CD8-positive, alpha-beta memory T cell (primary cell): ENCODE measurements at regions of chr17 and their contacts with region 1.

Region 1: DNA sequence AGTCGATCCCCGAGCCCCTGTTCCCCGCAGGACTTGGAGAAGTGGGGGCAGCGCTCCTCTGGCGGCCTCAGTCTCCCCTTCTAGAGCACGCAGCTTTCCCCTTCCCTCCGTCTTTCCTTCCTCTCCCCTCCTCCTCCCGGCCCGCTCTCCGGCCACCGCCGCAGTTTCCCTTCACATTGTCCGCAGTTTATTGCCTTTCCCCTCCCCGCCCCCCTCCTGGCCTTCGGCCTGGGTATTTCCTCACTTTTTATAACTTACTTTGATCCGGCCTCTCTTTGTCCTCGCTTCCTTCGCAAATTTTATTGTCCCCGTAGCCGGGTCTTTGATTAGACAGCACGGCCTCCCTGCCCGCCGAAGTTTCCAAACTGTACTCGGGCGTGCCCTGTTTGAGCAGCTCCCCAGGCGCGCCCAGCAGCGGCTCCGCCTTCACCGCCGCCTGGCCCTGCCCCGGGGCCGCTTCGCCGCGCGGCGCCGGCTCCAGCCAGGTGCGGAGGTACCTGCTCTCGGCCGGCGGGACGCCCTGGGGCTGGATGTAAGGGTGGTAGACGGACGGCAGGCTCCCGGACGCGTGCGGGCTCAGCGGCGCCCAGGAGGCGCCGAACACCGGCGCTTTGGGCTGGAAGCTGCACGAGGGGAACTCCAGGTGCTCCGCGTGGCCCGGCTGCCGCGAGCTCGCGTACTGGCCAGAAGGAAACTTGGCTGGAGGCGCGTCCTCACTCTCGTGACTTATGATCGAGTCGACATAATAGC is 488 bp downstream of the HOXB9 start:
- DNase-seq: peak in 2 of 5 donors; percentile 36 to 37
- H3K4me3 ChIP-seq: peak overlapping the region; percentile 41
- H3K4me3 Mint-ChIP-seq: peak overlapping the region; percentile 76 to 91 (median 84)
- H3K27ac ChIP-seq: peak overlapping the region; percentile 79
- H3K27ac Mint-ChIP-seq: peak overlapping the region in 3 of 8 donors; percentile 8 to 77 (median 12)
- H3K4me1 ChIP-seq: peaks cover 21% of the 10 kb centered on the region
- H3K4me1 Mint-ChIP-seq: peaks cover 6 to 21% (median 12%) of the 10 kb centered on the region in 3 donors
- H3K27me3 ChIP-seq: peaks cover 81% of the 10 kb centered on the region
- H3K27me3 Mint-ChIP-seq: peaks cover 59 to 91% of the 10 kb centered on the region in 2 donors

Region 2: DNA sequence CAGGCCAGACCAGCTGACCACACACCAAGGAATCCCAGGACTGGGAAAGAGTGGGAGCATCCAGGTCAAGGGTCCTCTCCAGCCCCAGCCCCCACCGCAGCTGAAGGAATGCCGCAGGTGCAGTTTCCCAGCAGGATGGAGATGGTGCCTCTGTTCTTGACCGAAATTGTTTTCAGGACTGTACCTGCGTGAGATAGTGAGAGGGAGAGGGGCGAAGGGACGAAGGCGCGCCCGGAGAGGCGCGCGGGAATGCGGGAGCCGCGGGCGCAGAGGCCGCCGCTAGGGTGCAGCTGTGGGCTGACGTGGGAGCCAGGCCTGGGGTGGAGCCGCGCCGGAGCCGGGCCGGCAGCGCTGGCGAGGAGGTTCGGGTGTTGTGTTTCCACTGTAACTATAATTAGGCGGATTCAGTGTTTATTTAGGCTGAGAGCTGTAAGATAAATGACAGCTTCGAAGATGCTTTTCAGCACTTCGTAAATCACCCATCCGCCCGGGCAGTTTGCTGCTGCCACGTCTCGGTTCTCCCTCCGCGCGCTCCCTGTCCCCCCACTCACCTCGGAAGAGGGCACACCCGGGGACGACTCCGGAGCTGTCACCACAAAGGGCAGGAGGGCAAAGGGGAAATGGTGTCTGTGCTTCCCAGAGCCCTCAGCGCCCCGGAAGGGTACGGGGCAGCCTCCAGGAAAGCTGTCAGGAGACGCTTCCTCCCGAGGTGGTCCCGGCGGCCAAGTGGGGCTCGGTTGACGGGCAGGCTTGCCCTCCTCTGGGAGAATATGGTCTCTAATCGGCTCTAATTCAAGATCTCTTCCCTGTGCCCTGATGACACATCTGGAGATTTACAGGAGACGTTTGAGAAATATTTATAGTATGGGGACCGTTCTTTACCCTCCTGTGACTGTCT is 133.0 kb before region 1 on chr17:
- CTCF ChIA-PET with region 1: no interaction called
- POLR2A ChIA-PET with region 1: no interaction called
- DNase-seq: peak; percentile 43 to 78 (median 55)
- H3K4me3 ChIP-seq: peak overlapping the region; percentile 78
- H3K4me3 Mint-ChIP-seq: peak overlapping the region in 6 of 7 donors; percentile 41 to 81 (median 65)
- H3K27ac ChIP-seq: peak overlapping the region; percentile 57
- H3K27ac Mint-ChIP-seq: peak overlapping the region in 1 of 8 donors; percentile 78
- H3K4me1 ChIP-seq: peaks cover 11% of the 10 kb centered on the region
- H3K4me1 Mint-ChIP-seq: peaks cover 2 to 12% (median 4%) of the 10 kb centered on the region in 3 donors
- H3K27me3 ChIP-seq: peaks cover 8% of the 10 kb centered on the region
- H3K27me3 Mint-ChIP-seq: peaks cover 4 to 12% of the 10 kb centered on the region in 2 donors

Region 3: DNA sequence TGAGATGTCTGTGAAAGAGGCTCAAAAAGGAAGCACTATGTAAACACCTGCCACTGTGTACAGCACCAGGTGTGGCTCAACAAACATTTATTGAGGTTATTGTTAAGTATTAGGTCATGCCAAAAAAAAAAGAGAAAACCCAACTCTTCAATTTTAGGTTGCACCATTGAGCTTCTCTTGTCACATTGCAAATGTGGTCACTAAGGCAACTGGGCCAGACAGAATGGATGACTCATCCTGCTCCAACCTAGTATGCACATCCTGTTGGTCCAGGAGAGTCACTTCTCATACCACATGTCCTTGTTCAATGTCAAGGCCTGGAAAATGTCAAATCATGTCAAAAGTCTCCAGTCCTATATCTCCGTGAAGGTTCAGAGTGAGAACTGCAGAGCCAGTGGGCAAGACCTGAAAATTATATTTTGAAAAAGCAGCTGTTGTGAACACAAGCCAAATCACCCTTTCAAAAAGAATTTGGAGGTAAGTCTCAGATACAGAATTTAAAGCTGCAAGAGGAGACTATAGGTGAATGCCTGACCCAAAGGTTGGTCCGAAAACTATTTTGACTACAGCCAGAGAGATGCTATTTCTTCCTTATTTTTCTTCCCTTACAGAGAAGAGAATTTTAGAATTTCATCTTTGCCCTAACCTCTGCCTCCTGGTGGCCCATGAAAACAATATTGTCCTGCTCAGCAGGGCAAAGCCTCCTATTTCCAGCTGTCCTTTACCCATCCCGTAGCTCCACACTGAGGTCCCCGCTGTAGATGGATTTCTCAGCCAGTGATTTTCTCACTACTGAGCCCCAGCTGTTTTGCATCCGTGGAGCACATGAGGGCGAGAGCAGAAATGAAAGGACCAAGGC is 119.7 kb before region 1 on chr17:
- CTCF ChIA-PET with region 1: no interaction called
- POLR2A ChIA-PET with region 1: no interaction called
- DNase-seq: peak in 4 of 5 donors; percentile 10 to 85 (median 38)
- H3K4me3 ChIP-seq: no peak overlapping the region
- H3K4me3 Mint-ChIP-seq: peak overlapping the region in 1 of 7 donors; percentile 52
- H3K27ac ChIP-seq: no peak overlapping the region
- H3K27ac Mint-ChIP-seq: peak overlapping the region; percentile 38 to 92 (median 74)
- H3K4me1 ChIP-seq: no peaks in the 10 kb centered on the region
- H3K4me1 Mint-ChIP-seq: peaks cover 14 to 35% (median 24%) of the 10 kb centered on the region in 3 donors
- H3K27me3 ChIP-seq: no peaks in the 10 kb centered on the region
- H3K27me3 Mint-ChIP-seq: peaks cover 0 to 5% of the 10 kb centered on the region in 2 donors

Region 4: GRCh38 chr17:48532261-48532660 is 93.4 kb before region 1 on chr17:
- CTCF ChIA-PET with region 1: no interaction called
- POLR2A ChIA-PET with region 1: no interaction called
- DNase-seq: no peak
- H3K4me3 ChIP-seq: no peak overlapping the region
- H3K4me3 Mint-ChIP-seq: no peak overlapping the region
- H3K27ac ChIP-seq: no peak overlapping the region
- H3K27ac Mint-ChIP-seq: no peak overlapping the region
- H3K4me1 ChIP-seq: no peaks in the 10 kb centered on the region
- H3K4me1 Mint-ChIP-seq: peaks cover 0 to 2% (median 0%) of the 10 kb centered on the region in 3 donors
- H3K27me3 ChIP-seq: no peaks in the 10 kb centered on the region
- H3K27me3 Mint-ChIP-seq: peaks cover 10% of the 10 kb centered on the region in 2 donors

Region 5: DNA sequence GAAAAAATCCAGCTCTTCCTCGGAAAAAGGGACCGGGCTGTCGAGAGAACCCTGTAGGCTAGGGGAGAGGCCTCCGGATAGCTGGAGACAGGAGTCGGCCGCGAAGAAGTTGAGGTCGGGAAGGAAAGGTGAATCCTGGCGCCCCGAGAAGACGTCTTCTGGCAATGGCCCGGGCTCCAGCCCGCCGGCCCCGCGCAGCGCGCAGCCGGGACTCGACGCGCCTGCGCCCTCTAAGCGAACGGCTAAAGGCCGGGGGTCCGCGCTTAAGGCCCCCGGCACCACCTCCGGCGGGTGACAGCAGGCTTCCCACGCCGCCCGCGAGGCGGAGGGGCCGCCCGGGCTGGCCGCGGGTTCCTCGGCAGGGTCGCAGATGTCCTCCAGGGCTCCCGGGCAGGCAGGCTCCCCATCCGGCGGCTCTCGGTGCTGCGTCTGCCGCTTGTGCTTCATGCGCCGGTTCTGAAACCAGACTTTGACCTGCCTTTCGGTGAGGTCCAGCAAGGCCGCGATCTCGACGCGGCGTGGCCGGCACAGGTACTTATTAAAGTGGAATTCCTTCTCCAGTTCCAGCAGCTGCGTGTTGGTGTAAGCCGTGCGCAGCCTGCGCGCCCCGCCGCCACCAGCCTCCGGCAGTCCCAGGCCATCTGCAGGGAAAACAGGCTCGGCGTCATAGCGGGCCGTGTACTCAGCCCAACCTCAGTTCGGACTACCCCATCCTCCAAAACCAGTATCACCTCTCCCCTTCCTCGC is 82.4 kb before region 1 on chr17:
- CTCF ChIA-PET with region 1: no interaction called
- POLR2A ChIA-PET with region 1: no interaction called
- DNase-seq: peak; percentile 32 to 75 (median 48)
- H3K4me3 ChIP-seq: peak overlapping the region; percentile 81
- H3K4me3 Mint-ChIP-seq: peak overlapping the region; percentile 88 to 99 (median 95)
- H3K27ac ChIP-seq: peak overlapping the region; percentile 92
- H3K27ac Mint-ChIP-seq: peak overlapping the region; percentile 85 to 100 (median 94)
- H3K4me1 ChIP-seq: peaks cover 25% of the 10 kb centered on the region
- H3K4me1 Mint-ChIP-seq: peaks cover 24 to 66% (median 29%) of the 10 kb centered on the region in 3 donors
- H3K27me3 ChIP-seq: peaks cover 4% of the 10 kb centered on the region
- H3K27me3 Mint-ChIP-seq: peaks cover 7 to 22% of the 10 kb centered on the region in 2 donors

Region 6: DNA sequence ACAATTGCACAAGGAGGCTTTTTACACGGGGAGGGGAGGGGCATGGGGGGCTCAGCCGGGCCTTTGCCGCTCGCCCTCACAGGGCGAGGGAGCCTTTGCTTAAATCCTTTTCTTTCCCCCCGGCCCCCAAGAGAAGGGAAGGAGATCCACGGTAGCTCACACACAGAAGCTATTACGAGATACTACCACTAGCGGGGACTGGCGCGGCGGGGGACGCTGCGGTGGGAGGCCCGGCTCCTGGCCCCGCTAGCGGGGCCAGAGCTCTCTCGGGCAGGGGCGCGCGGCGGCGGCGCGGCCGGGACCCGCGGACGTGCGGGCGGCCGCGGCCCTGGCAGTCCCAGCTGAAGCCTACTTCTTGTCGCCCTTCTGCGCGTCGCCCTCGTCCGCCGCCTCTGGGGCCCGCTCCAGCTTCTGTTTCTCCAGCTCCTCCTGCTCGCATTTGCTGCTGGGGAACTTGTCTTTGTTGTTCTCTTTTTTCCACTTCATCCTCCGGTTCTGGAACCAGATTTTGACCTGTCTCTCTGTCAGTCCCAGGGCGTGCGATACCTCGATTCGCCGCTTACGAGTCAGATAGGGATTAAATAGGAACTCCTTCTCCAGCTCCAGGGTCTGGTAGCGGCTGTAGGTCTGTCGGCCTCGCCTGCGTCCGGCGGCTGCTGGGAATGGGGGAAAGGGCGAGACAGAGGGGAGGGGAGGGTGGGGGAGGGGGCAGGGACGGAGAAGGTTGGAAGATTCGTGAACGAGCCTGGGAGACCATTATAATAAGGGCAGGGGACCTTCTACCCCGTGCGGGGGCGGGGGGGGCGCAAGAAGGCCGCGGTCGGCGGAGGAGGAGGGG is 12.6 kb before region 1 on chr17:
- CTCF ChIA-PET with region 1: interaction called, 25 read pairs
- POLR2A ChIA-PET with region 1: interaction called, 3 read pairs
- DNase-seq: peak in 4 of 5 donors; percentile 46 to 67 (median 50)
- H3K4me3 ChIP-seq: peak overlapping the region; percentile 62
- H3K4me3 Mint-ChIP-seq: peak overlapping the region; percentile 81 to 91 (median 88)
- H3K27ac ChIP-seq: no peak overlapping the region
- H3K27ac Mint-ChIP-seq: peak overlapping the region in 3 of 8 donors; percentile 3 to 51 (median 43)
- H3K4me1 ChIP-seq: peaks cover 53% of the 10 kb centered on the region
- H3K4me1 Mint-ChIP-seq: peaks cover 40 to 65% (median 55%) of the 10 kb centered on the region in 3 donors
- H3K27me3 ChIP-seq: peaks cover 70% of the 10 kb centered on the region
- H3K27me3 Mint-ChIP-seq: peaks cover 77 to 82% of the 10 kb centered on the region in 2 donors